ENCODE measurements at regions of chr20 and their contacts with region 1.

Region 1: DNA sequence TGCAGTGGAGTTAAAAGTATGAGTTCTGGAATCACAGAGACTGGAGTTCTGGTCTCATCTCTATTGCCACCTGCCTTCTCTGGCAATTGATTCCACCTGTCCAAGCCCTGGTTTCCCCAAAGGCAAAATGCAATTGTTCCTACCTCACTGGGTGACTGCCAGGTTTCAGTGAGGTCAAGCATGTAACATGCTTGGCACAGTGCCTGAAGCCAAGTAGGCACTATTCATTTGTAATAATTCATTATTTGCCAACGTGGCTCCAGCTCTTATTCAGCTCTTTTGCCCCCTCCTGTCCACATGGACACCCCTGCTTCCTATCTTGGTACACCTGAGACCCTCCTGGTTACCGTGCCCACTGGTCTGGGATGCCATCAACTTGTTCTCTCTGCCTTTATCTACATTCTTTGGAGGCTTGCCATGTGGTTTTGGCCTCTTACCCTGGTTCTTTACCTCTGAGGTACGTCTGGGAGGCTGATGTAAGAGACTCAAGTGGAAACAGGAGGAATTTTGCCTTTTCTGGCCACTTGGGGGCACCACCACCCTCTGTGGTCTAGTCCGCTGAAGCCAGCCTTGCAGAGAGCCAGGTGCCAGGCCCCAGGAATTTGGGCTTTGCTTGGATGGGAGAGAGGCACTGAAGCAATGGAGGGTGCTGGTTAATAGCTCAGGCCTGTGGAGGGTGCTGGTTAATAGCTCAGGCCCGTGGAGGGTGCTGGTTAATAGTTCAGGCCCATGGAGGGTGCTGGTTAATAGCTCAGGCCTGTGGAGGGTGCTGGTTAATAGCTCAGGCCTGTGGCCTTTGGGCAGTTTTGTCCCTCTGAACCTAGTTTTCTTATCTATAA is 1.7 kb downstream of the KCNK15 start:
- DNase-seq: peak; percentile 80 to 86
- ATAC-seq: peak; percentile 65 to 85
- H3K4me3 ChIP-seq: no peak overlapping the region
- H3K27ac ChIP-seq: peak overlapping the region; percentile 62 to 94
- H3K4me1 ChIP-seq: peaks cover 36% of the 10 kb centered on the region
- CTCF ChIP-seq: peak; percentile 82
- EP300 ChIP-seq: no peak; a peak in 1 of 5 replicates
- POLR2A ChIP-seq: no peak
- RAD21 ChIP-seq: peak; percentile 68 to 77

Region 2: DNA sequence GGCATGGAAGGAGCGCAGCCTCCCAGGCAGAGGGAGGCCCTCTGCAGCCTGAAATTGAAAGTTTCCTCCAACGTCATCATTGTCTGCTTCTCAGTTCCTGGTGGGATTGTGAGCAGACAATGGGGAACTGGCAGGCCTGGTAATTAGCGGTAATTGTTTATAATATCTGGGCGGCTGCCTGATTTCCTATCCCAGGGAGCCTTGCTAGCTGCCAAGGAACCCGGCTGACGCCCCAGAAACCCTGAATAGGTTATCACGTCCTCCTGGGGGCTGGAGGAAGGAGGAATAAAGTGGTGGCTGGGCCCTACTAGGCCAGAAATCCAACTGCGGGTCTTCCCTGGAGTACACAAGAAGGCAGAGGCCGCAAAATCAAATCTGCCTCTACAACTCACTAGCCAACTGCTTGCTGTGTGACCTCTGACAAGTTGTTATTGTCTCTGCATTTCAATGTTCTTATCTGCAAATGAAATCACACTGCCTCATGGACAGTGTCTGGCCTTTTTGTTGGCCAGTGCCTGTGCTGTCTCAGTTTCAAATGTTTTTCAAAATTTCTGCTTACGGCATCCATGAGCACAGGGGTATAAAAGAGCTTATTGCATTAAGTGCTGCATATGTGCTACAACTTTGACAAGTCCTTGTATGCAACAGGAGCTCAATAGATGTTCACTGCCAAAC is 15.2 kb after region 1 on chr20:
- CTCF ChIA-PET with region 1: interaction called, 54 read pairs
- POLR2A ChIA-PET with region 1: no interaction called
- DNase-seq: no peak
- ATAC-seq: no peak
- H3K4me3 ChIP-seq: no peak overlapping the region
- H3K27ac ChIP-seq: no peak overlapping the region
- H3K4me1 ChIP-seq: no peaks in the 10 kb centered on the region
- CTCF ChIP-seq: no peak
- EP300 ChIP-seq: no peak
- POLR2A ChIP-seq: no peak
- RAD21 ChIP-seq: no peak

Region 3: DNA sequence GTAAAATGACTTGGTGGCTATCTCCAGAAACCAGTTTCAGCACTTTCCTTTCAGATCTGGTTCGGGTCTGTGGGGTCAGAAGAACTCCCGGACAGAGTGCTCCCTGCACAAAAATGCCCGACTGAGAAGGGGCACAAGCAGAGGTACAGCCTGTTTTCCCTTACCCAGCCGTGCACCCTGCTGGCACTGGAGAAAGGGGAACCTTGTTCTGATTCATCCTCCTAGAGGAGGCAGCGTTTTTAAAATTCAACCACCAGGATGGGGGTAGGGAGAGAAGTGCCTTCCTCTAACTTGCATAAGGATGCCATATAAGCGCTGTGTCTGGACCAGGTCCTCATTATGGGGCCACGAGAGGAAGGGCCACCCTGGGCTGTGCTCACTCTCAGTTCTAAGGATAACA is 45.4 kb after region 1 on chr20:
- CTCF ChIA-PET with region 1: interaction called, 10 read pairs
- POLR2A ChIA-PET with region 1: no interaction called
- DNase-seq: no peak
- ATAC-seq: no peak
- H3K4me3 ChIP-seq: no peak overlapping the region
- H3K27ac ChIP-seq: no peak overlapping the region
- H3K4me1 ChIP-seq: no peaks in the 10 kb centered on the region
- CTCF ChIP-seq: no peak
- EP300 ChIP-seq: no peak
- POLR2A ChIP-seq: no peak
- RAD21 ChIP-seq: no peak

Region 4: GRCh38 chr20:44837946-44838345 is 90.6 kb after region 1 on chr20:
- CTCF ChIA-PET with region 1: interaction called, 10 read pairs
- POLR2A ChIA-PET with region 1: no interaction called
- DNase-seq: no peak
- ATAC-seq: no peak
- H3K4me3 ChIP-seq: no peak overlapping the region
- H3K27ac ChIP-seq: no peak overlapping the region
- H3K4me1 ChIP-seq: no peaks in the 10 kb centered on the region
- CTCF ChIP-seq: no peak
- EP300 ChIP-seq: no peak
- POLR2A ChIP-seq: no peak
- RAD21 ChIP-seq: no peak

Region 5: DNA sequence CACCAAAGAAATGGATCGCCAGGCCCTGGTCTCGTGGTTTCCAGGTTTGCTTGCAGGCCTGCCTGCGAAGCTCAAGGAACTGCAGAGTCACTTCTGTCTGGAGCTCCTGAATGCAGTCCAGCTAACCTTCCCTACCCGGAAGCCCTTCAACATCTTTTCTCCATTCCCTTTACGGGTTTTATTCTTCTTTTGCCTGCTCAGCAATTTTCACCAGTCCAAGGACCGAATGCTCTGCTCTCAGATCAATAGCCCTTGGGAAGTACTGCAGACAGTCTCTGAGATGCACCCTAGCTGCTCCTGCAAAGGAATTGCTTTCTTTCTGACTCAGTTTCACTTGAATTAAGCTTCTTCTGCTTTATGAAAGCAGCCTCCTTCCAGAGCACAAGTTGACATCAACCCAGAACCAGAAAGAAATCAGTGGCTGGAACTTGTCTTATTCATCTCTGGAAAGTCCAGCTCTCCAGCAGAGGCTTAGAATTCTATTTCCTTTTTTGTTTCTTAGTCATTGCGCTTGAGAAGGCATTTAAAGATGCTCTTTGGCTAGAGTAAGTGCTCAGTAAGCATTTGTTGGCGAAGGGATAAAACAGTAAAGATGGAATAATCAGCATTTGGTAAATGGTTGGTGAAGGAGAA is 119.4 kb after region 1 on chr20:
- CTCF ChIA-PET with region 1: interaction called, 96 read pairs
- POLR2A ChIA-PET with region 1: interaction called, 3 read pairs
- DNase-seq: no peak
- ATAC-seq: no peak
- H3K4me3 ChIP-seq: no peak overlapping the region
- H3K27ac ChIP-seq: peak overlapping the region in 1 of 2 experiments; percentile 36; a peak in 2 of 6 replicates
- H3K4me1 ChIP-seq: peaks cover 9% of the 10 kb centered on the region; the same call in 2 of the 3 replicates
- CTCF ChIP-seq: no peak
- EP300 ChIP-seq: no peak
- POLR2A ChIP-seq: no peak
- RAD21 ChIP-seq: no peak

Region 6: GRCh38 chr20:45070932-45071632 is 323.7 kb after region 1 on chr20:
- CTCF ChIA-PET with region 1: no interaction called
- POLR2A ChIA-PET with region 1: no interaction called
- DNase-seq: no peak
- ATAC-seq: no peak
- H3K4me3 ChIP-seq: no peak overlapping the region
- H3K27ac ChIP-seq: no peak overlapping the region
- H3K4me1 ChIP-seq: peaks cover 6% of the 10 kb centered on the region; the same call in 1 of the 3 replicates
- CTCF ChIP-seq: no peak
- EP300 ChIP-seq: no peak
- POLR2A ChIP-seq: no peak
- RAD21 ChIP-seq: no peak